ENCODE measurements at regions of chr12 and their contacts with region 1.

Region 1: DNA sequence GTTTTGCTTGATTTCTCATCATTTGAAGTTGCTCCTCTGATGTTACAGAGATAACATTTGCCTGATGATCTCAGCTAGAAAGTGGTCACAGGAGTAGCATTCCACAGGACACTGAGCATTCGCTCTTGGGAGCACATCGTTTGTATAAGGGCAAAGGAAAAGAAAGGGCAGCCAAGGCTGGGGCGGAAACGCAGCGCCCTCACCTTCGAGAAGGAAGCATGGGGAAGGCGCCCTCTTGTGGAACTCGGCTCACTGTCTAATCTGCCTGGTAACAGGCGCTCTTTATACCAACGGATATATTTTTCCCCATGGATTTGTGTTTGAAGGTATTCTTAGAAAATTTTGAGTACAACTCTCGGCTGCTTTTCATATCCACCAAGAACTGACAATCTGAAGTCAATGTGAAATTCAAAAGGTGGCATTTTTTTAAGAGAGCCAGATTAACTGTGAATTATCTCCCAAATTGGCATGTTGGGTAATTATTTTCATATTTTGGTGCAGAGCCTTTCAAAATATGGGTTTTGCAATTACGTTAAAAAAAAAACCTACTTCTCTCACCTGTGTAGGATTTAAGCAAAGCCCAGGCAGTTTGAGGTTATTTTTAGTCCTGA is 172.7 kb downstream of the CAND1 start:
- DNase-seq: peak; percentile 90
- ATAC-seq: peak; percentile 97

Region 2: DNA sequence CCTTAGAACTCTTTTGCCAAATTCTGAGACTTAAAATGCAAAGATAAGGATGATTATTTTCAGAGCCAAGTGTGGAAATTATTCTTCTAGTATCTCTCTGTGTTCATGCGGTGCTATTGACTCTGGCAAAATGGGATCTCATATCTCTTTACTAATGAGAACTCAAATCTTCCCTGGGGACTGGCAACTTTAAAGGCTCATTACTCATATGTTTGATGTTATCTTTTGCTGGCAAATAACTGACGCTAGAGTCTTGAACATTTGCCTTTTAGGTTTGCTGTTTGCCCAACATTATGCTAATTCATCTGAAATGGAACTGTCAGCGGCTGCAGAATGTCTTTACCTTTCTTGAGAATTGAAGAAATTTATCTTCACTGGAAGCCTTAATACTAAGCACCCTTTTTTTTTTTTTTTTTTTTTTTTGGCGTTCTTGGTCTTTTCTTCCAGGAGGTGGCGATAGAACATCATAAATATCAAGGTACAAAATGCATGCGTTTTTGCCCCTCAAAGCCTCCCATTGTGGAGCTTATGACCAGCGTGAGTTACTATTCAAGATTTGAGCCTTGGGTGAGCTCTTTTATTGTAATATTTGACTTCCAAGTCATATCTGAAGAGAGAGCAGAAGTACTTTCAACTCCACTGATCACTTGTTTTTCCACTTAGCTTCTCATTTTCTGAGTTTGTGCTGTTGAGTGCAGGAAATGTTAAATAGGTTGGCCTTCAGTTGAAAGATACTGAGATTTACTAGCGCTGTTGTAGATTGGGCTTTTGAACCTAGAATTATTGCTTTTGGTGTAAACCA is 86.1 kb before region 1 on chr12:
- intact Hi-C with region 1: loop called (anchors 5 kb)
- DNase-seq: no peak
- ATAC-seq: peak; percentile 56

Region 3: DNA sequence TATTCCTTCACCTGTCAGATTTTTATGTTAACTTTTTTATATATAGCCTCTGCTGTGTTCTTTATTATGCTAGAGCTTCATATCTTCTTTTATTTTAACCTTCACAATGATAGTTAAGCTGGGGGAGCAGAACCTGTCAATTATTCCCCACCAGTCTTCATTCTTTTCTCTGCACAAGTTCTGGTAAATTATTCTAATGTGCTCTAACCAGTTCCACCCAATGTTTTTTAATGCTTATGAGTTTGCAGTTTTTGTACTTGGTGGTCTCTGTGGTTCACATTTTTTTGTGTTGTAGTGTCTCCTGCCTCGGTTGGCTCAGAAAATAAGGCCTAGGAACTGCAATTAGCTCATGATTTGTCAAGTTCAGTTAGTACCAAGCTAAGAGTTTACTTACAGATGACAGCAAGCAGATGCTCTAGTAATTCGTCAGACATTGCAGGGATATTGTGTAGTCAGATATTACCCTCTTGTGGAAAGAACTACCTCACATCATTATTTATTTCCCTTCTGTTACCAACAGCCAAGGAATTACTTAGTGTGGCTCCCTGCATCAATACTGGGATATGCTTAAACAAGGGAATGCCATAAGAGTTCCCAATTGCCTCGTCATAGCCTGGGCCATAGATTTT is 221.2 kb after region 1 on chr12:
- intact Hi-C with region 1: no loop called
- DNase-seq: no peak
- ATAC-seq: no peak

Measured in Right ventricle myocardium inferior (tissue), 1 donor.